ENCODE measurements at regions of chr7 and their contacts with region 1.

Region 1: GRCh38 chr7:40000734-40001315 is 50.8 kb downstream of the CDK13 start:
- DNase-seq: no peak
- H3K4me3 ChIP-seq: no peak overlapping the region
- H3K27ac ChIP-seq: no peak overlapping the region
- H3K4me1 ChIP-seq: no peaks in the 10 kb centered on the region
- CTCF ChIP-seq: no peak

Region 2: GRCh38 chr7:39987476-39988347 is 13.1 kb before region 1 on chr7:
- CTCF ChIA-PET with region 1: no interaction called
- POLR2A ChIA-PET with region 1: interaction called, 10 read pairs
- intact Hi-C with region 1: no loop called
- DNase-seq: peak; percentile 17
- H3K4me3 ChIP-seq: no peak overlapping the region
- H3K27ac ChIP-seq: peak overlapping the region; percentile 13
- H3K4me1 ChIP-seq: peaks cover 26% of the 10 kb centered on the region
- CTCF ChIP-seq: no peak

Region 3: GRCh38 chr7:40047661-40048060 is 46.8 kb after region 1 on chr7:
- CTCF ChIA-PET with region 1: no interaction called
- POLR2A ChIA-PET with region 1: interaction called, 10 read pairs
- intact Hi-C with region 1: no loop called
- DNase-seq: peak; percentile 32
- H3K4me3 ChIP-seq: no peak overlapping the region
- H3K27ac ChIP-seq: no peak overlapping the region
- H3K4me1 ChIP-seq: no peaks in the 10 kb centered on the region
- CTCF ChIP-seq: peak; percentile 71

Measured in OCI-LY7 (cell line).